Activated CD8-positive, alpha-beta memory T cell treated with anti-CD3 and anti-CD28 coated beads, Interleukin-2, amount 10 ng/mL, durations not matched to agents 7 days and 5 days (primary cell): ENCODE measurements at regions of chr1 and their contacts with region 1.

Region 1: GRCh38 chr1:230978491-230979388 is at the starts of genes ARV1 and TTC13:
- DNase-seq: peak; percentile 99
- ATAC-seq: peak; percentile 95
- H3K4me3 Mint-ChIP-seq: peak within 1 kb of the TSS; percentile 99
- H3K27ac Mint-ChIP-seq: peak within 1 kb of the TSS; percentile 96
- H3K4me1 Mint-ChIP-seq: peaks cover 33% of the 10 kb centered on the region
- H3K27me3 Mint-ChIP-seq: no peaks in the 10 kb centered on the region
- total RNA-seq, gene ARV1: 12.9 to 16.0 TPM
- total RNA-seq, gene TTC13: 30.8 to 39.2 TPM

Region 2: DNA sequence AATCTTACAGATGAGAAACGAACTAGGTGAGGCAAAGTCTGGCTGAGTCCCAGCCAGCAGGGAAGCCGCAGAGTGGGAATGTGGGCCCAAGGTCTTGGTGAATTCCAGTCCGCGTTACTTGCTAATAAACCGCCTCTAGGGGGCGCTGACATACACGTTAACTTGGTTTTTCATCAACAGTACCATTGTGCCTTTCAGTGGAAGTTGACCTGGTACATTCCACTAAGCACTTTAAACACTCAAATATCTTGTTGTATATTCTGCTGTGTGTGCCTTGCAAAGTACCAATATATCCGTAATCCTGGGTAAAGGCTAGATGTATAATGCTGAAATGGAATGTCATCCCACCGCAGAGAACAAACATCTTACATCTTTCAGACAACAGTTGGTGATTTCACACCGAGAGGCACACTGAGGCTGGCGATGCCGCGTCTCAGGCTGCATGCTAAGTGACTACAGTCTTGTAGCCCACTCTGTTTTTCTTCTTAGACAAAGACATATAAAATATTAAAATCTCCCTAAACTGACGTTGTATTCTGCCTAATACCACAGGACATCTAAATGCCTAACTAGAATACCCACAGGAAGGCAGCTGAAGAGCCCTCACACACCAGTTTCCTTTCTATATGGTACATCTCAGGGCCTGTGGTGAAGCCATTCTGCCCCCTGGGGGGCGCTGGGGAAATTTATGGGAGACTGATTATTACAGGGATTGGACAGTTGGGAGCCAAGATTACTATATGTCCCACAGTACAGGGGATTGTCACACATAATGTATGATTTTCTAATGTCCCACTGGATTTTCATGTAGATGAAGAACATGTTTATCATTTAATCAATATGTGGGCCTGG is 61.2 kb before region 1 on chr1:
- CTCF ChIA-PET with region 1: interaction called, 14 read pairs
- DNase-seq: peak; percentile 78
- ATAC-seq: peak; percentile 80
- H3K4me3 Mint-ChIP-seq: no peak overlapping the region
- H3K27ac Mint-ChIP-seq: no peak overlapping the region
- H3K4me1 Mint-ChIP-seq: peaks cover 4% of the 10 kb centered on the region
- H3K27me3 Mint-ChIP-seq: no peaks in the 10 kb centered on the region

Region 3: DNA sequence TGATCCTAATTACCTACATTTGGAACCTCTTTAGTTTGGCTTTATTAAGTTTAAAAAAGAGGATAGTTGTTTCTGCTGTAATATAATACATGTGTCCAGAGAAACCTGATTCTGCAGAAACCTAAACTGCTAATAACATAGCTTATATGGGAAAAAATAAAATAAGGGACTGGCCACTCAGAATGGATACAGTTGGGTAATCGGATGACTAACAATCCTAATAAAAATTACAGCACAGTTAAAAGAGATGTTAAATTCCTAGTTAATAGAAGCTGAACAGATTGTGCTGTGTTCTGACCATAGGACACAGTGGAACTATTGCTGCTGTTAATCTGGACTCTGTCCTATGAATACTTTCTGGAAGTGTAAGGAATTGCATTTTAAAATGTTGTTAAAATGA is 16.1 kb after region 1 on chr1:
- CTCF ChIA-PET with region 1: no interaction called
- DNase-seq: no peak
- ATAC-seq: no peak
- H3K4me3 Mint-ChIP-seq: no peak overlapping the region
- H3K27ac Mint-ChIP-seq: no peak overlapping the region
- H3K4me1 Mint-ChIP-seq: no peaks in the 10 kb centered on the region
- H3K27me3 Mint-ChIP-seq: no peaks in the 10 kb centered on the region

Region 4: GRCh38 chr1:231040019-231040799 is 61.5 kb after region 1 on chr1 and contains the start of gene FAM89A:
- CTCF ChIA-PET with region 1: interaction called, 12 read pairs
- DNase-seq: peak; percentile 72
- ATAC-seq: peak; percentile 84
- H3K4me3 Mint-ChIP-seq: peak within 1 kb of the TSS; percentile 69
- H3K27ac Mint-ChIP-seq: no peak within 1 kb of the TSS
- H3K4me1 Mint-ChIP-seq: peaks cover 25% of the 10 kb centered on the region
- H3K27me3 Mint-ChIP-seq: peaks cover 27% of the 10 kb centered on the region
- total RNA-seq, gene FAM89A: 5.9 to 9.8 TPM